Common myeloid progenitor, CD34-positive (primary cell): ENCODE measurements at regions of chr2 and their contacts with region 1.

Region 1: GRCh38 chr2:159168707-159169106 is 117.8 kb downstream of the WDSUB1 start:
- DNase-seq: no peak
- H3K4me3 ChIP-seq: no peak overlapping the region
- H3K27ac ChIP-seq: no peak overlapping the region
- H3K4me1 ChIP-seq: peaks cover 9 to 21% (median 14%) of the 10 kb centered on the region in 4 experiments
- H3K27me3 ChIP-seq: no peaks in the 10 kb centered on the region

Region 2: DNA sequence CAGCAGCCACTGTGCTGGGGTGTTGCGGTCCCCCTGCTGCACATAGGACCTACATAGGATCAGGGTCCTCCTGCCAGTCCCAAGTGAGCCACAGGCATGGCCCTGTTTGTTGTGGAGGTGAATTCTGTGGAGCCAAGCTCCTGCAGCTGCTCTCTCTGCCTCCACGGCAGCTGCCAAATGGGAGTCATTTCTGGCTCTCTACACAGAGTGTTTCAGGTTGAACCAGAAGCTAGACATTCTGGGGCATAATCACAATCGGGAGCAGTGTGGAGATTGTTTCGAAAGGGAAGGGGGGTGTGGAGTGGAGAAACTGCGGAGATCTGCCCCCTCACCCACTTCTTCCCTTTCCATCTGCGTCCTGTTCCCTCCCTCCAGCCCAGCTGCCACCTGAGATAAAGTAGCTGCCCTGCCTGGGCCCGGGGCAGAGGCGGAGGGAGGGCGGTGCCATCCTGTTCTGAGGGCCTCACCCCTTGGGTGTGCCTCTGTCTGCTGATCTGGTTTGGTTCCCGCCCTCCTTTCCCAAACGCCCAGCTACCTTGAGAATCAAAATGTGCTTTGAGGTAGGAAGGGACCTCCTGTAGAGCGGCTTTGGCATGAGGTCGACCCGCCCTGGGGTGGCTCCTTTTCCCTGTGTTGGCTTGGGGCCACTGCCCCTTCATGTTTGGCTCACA is 21.6 kb before region 1 on chr2:
- CTCF ChIA-PET with region 1: interaction called, 80 read pairs
- POLR2A ChIA-PET with region 1: interaction called, 6 read pairs
- DNase-seq: peak; percentile 85 to 97 (median 96)
- H3K4me3 ChIP-seq: peak overlapping the region in 6 of 7 experiments; percentile 7 to 62 (median 36)
- H3K27ac ChIP-seq: peak overlapping the region in 1 of 2 experiments; percentile 31
- H3K4me1 ChIP-seq: peaks cover 22 to 37% (median 34%) of the 10 kb centered on the region in 4 experiments
- H3K27me3 ChIP-seq: no peaks in the 10 kb centered on the region

Region 3: GRCh38 chr2:159179696-159180095 is 11.0 kb after region 1 on chr2:
- CTCF ChIA-PET with region 1: interaction called, 10 read pairs
- POLR2A ChIA-PET with region 1: no interaction called
- DNase-seq: no peak
- H3K4me3 ChIP-seq: no peak overlapping the region
- H3K27ac ChIP-seq: no peak overlapping the region
- H3K4me1 ChIP-seq: no peaks in the 10 kb centered on the region
- H3K27me3 ChIP-seq: no peaks in the 10 kb centered on the region